Psoas muscle (tissue), 8 donors: ENCODE measurements at regions of chr15 and their contacts with region 1.

Region 1: GRCh38 chr15:101372149-101372577 is 77.1 kb upstream of the SNRPA1 start:
- DNase-seq: peak in 1 of 2 donors; percentile 49
- ATAC-seq: no peak
- H3K4me3 ChIP-seq: no peak overlapping the region
- H3K27ac ChIP-seq: no peak overlapping the region
- H3K4me1 ChIP-seq: no peaks in the 10 kb centered on the region
- H3K27me3 ChIP-seq: no peaks in the 10 kb centered on the region
- CTCF ChIP-seq: no peak

Region 2: GRCh38 chr15:101426881-101427280 is 54.7 kb after region 1 on chr15:
- intact Hi-C with region 1: loop called in 1 of 2 experiments (anchors 5 kb)
- DNase-seq: no peak
- ATAC-seq: peak in 1 of 4 donors; percentile 15
- H3K4me3 ChIP-seq: no peak overlapping the region
- H3K27ac ChIP-seq: no peak overlapping the region
- H3K4me1 ChIP-seq: no peaks in the 10 kb centered on the region
- H3K27me3 ChIP-seq: no peaks in the 10 kb centered on the region
- CTCF ChIP-seq: no peak